Activated naive CD4-positive, alpha-beta T cell treated with anti-CD3 and anti-CD28 coated beads, Interleukin-2, amount 10 ng/mL, durations not matched to agents 7 days and 5 days (primary cell): ENCODE measurements at regions of chr16 and their contacts with region 1.

Region 1: GRCh38 chr16:20849587-20850390 is 43.5 kb downstream of the REXO5 start:
- DNase-seq: peak; percentile 74
- H3K4me3 Mint-ChIP-seq: no peak overlapping the region
- H3K27ac Mint-ChIP-seq: no peak overlapping the region
- H3K4me1 Mint-ChIP-seq: peaks cover 23% of the 10 kb centered on the region
- H3K27me3 Mint-ChIP-seq: no peaks in the 10 kb centered on the region

Region 2: GRCh38 chr16:20866145-20866772 is 16.5 kb after region 1 on chr16:
- CTCF ChIA-PET with region 1: interaction called, 20 read pairs
- DNase-seq: no peak
- H3K4me3 Mint-ChIP-seq: no peak overlapping the region
- H3K27ac Mint-ChIP-seq: no peak overlapping the region
- H3K4me1 Mint-ChIP-seq: peaks cover 38% of the 10 kb centered on the region
- H3K27me3 Mint-ChIP-seq: no peaks in the 10 kb centered on the region

Region 3: GRCh38 chr16:20900299-20901067 is 50.7 kb after region 1 on chr16 and contains the starts of genes DCUN1D3 and LYRM1:
- CTCF ChIA-PET with region 1: interaction called, 16 read pairs
- DNase-seq: peak; percentile 92
- H3K4me3 Mint-ChIP-seq: peak within 1 kb of the TSS; percentile 84
- H3K27ac Mint-ChIP-seq: peak within 1 kb of the TSS; percentile 91
- H3K4me1 Mint-ChIP-seq: peaks cover 73% of the 10 kb centered on the region
- H3K27me3 Mint-ChIP-seq: no peaks in the 10 kb centered on the region

Region 4: GRCh38 chr16:20944861-20945574 is 95.2 kb after region 1 on chr16:
- CTCF ChIA-PET with region 1: interaction called, 20 read pairs
- DNase-seq: peak; percentile 69
- H3K4me3 Mint-ChIP-seq: no peak overlapping the region
- H3K27ac Mint-ChIP-seq: no peak overlapping the region
- H3K4me1 Mint-ChIP-seq: peaks cover 41% of the 10 kb centered on the region
- H3K27me3 Mint-ChIP-seq: peaks cover 15% of the 10 kb centered on the region

Region 5: GRCh38 chr16:21001262-21001661 is 151.5 kb after region 1 on chr16:
- CTCF ChIA-PET with region 1: interaction called, 11 read pairs
- DNase-seq: peak; percentile 49
- H3K4me3 Mint-ChIP-seq: no peak overlapping the region
- H3K27ac Mint-ChIP-seq: no peak overlapping the region
- H3K4me1 Mint-ChIP-seq: no peaks in the 10 kb centered on the region
- H3K27me3 Mint-ChIP-seq: peaks cover 18% of the 10 kb centered on the region

Region 6: DNA sequence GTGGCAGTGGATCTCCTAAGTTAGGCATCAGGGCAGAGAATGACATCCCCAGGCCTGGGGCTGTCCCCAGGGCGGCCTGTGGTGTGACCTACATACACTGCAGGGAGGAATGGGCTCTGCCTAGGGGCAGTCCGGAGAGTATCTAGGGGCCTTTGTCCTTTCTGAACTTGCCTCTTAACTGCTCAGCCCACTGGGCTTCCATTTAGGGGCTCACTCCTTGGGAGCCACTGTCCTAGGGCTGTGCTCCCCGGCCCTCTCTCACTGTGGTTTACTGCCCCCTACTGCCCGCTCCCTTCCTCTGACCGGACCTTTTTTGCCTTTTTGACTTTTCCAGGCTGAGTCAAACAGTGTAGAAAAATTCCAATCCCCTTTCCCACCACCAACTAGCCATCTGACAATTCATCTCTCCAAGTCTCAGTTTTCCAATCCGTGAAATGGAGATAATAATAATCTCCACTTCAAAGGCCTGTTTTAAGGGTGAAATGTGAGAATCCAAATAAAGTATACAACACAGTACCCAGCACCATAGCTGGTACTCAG is 234.0 kb after region 1 on chr16:
- CTCF ChIA-PET with region 1: interaction called, 30 read pairs
- DNase-seq: peak; percentile 72
- H3K4me3 Mint-ChIP-seq: no peak overlapping the region
- H3K27ac Mint-ChIP-seq: no peak overlapping the region
- H3K4me1 Mint-ChIP-seq: no peaks in the 10 kb centered on the region
- H3K27me3 Mint-ChIP-seq: peaks cover 10% of the 10 kb centered on the region